ENCODE measurements at regions of chr14 and their contacts with region 1.

Region 1: GRCh38 chr14:67426983-67427606 is 15.1 kb upstream of the PLEK2 start:
- DNase-seq: peak; percentile 73 to 76 (median 74)
- H3K4me3 ChIP-seq: no peak overlapping the region
- H3K4me3 Mint-ChIP-seq: no peak overlapping the region
- H3K27ac ChIP-seq: no peak overlapping the region
- H3K27ac Mint-ChIP-seq: no peak overlapping the region
- H3K4me1 ChIP-seq: peaks cover 7% of the 10 kb centered on the region
- H3K4me1 Mint-ChIP-seq: no peaks in the 10 kb centered on the region
- H3K27me3 ChIP-seq: no peaks in the 10 kb centered on the region
- H3K27me3 Mint-ChIP-seq: peaks cover 12 to 21% of the 10 kb centered on the region in 2 donors

Region 2: DNA sequence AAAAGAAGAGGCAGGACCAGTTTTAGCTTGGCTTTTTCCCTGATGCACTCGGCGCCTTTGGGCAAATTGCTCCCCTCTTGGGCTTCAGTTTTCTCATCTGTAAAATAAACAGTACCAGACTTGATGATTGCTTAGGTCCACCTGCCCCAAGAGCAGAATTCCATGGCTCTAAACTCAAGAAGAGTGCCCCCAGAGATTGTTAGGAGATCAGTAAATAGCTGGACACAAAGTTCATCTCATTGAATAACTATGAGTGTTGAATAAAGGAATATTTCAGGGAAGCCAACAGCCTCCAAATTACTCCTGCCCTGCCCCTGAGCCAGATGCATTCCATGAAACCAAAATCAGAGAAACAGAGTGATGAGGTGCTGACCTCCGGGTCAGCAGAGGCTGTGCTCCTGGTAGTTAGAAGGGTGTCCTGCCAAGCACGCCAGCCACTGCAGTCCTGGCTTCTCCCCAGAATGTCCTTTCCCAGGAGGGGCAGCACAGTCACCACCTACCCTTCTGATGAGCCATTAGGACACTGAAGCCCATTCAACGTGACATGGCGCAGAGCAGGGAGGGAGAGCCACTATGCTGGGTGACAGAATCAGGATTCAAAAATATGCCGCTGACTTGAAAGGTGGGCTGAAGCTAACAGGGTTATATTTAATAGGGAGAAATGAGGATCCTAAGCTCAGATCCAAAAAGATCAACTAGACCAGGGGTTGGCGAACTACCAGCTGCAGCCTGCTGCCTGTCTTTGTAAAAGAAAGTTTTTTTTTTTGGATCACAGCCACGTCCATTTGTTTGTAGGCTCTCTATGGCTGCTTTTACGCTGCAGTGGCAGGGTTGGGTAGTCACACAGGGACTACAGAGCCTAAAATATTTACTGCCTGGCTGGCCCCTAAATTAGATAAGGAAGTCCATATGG is 19.3 kb after region 1 on chr14:
- CTCF ChIA-PET with region 1: interaction called, 14 read pairs
- POLR2A ChIA-PET with region 1: no interaction called
- intact Hi-C with region 1: no loop called
- DNase-seq: no peak
- H3K4me3 ChIP-seq: no peak overlapping the region
- H3K4me3 Mint-ChIP-seq: no peak overlapping the region
- H3K27ac ChIP-seq: no peak overlapping the region
- H3K27ac Mint-ChIP-seq: peak overlapping the region in 1 of 7 donors; percentile 8
- H3K4me1 ChIP-seq: no peaks in the 10 kb centered on the region
- H3K4me1 Mint-ChIP-seq: no peaks in the 10 kb centered on the region
- H3K27me3 ChIP-seq: no peaks in the 10 kb centered on the region
- H3K27me3 Mint-ChIP-seq: peaks cover 5 to 9% of the 10 kb centered on the region in 2 donors

Region 3: DNA sequence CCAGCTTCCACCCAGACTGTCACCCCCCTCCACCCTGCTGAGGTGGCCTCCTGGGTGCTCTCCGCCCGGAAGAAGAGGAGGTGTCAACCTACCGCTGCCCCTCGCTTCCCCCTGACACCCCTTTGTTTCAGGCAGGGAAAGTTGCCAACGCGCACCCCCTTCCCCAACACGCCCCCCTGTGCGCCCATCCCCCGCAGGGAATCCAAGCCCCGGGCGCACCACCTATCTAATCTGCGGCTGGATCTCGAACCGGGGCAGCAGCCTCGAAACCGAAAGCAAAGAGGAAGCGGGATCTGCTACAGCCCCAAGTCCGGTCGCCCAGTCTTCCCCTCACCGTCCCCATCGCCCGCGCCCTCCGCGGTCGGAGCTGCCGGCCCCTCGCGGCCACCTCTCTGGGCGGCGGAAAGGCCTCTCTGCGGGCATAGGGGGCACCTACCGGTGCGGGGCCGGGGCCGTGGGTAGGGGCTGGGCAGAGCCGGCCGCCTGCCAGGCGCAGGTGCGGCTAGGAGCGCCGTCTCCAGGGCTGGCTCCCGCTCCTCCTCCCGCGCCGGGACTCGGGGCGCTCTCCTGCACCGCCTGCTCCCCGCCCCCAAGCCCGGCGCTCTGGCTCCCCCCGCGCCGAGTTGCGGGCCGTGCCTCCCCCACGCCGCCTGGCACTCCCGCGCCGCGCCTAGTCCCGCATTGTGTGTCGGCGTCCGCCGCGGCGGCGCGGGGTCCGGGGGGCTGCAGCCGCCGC is 87.7 kb after region 1 on chr14:
- CTCF ChIA-PET with region 1: interaction called, 12 read pairs
- POLR2A ChIA-PET with region 1: no interaction called
- intact Hi-C with region 1: no loop called
- DNase-seq: peak; percentile 46 to 59 (median 55)
- H3K4me3 ChIP-seq: peak overlapping the region; percentile 53 to 56
- H3K4me3 Mint-ChIP-seq: peak overlapping the region; percentile 90 to 97 (median 94)
- H3K27ac ChIP-seq: peak overlapping the region; percentile 68
- H3K27ac Mint-ChIP-seq: peak overlapping the region; percentile 88 to 96 (median 92)
- H3K4me1 ChIP-seq: peaks cover 25% of the 10 kb centered on the region
- H3K4me1 Mint-ChIP-seq: peaks cover 13 to 36% (median 23%) of the 10 kb centered on the region in 4 donors
- H3K27me3 ChIP-seq: no peaks in the 10 kb centered on the region
- H3K27me3 Mint-ChIP-seq: no peaks in the 10 kb centered on the region

Region 4: GRCh38 chr14:67557126-67557525 is 130.0 kb after region 1 on chr14:
- CTCF ChIA-PET with region 1: interaction called, 324 read pairs
- POLR2A ChIA-PET with region 1: no interaction called
- intact Hi-C with region 1: no loop called
- DNase-seq: no peak
- H3K4me3 ChIP-seq: no peak overlapping the region
- H3K4me3 Mint-ChIP-seq: no peak overlapping the region
- H3K27ac ChIP-seq: no peak overlapping the region
- H3K27ac Mint-ChIP-seq: no peak overlapping the region
- H3K4me1 ChIP-seq: no peaks in the 10 kb centered on the region
- H3K4me1 Mint-ChIP-seq: no peaks in the 10 kb centered on the region
- H3K27me3 ChIP-seq: no peaks in the 10 kb centered on the region
- H3K27me3 Mint-ChIP-seq: peaks cover 0 to 4% of the 10 kb centered on the region in 2 donors

Region 5: GRCh38 chr14:67583711-67584644 is 156.9 kb after region 1 on chr14:
- CTCF ChIA-PET with region 1: interaction called, 26 read pairs
- POLR2A ChIA-PET with region 1: no interaction called
- intact Hi-C with region 1: no loop called
- DNase-seq: peak in 4 of 5 donors; percentile 14 to 34 (median 30)
- H3K4me3 ChIP-seq: no peak overlapping the region
- H3K4me3 Mint-ChIP-seq: no peak overlapping the region
- H3K27ac ChIP-seq: no peak overlapping the region
- H3K27ac Mint-ChIP-seq: no peak overlapping the region
- H3K4me1 ChIP-seq: no peaks in the 10 kb centered on the region
- H3K4me1 Mint-ChIP-seq: no peaks in the 10 kb centered on the region
- H3K27me3 ChIP-seq: no peaks in the 10 kb centered on the region
- H3K27me3 Mint-ChIP-seq: no peaks in the 10 kb centered on the region

Region 6: DNA sequence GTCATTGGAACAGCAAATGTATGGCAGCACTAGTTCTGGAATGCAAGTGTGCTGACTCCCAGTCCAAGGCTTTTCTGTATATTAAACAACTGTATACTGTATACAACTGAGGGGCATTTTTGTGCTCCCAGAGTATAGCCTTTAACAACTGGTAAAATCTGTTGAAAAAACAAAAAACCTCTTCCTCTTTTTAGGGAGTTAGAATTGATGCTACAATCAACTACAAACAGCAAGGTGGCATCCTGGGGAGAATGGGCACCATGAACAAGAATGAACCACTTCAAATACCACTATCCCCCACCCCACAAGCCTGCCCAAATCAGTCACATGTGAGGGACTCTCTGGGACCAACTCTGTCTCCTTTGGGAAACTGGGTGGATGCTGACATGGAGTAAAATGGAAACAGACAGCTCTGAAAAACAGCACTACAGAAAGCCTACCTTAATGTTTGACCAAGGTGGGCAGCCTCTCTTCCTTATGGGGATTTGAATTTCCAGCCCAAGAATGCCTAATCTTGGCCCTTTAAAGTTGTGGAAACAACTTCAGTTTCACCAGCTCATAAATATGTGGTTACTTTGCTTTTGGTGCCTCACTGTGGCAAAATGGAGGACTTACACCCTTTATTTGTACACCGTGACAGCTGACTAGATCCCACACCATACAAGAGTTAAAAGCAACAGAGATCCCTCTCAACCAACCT is 239.8 kb after region 1 on chr14:
- CTCF ChIA-PET with region 1: interaction called, 12 read pairs
- POLR2A ChIA-PET with region 1: no interaction called
- intact Hi-C with region 1: loop called (anchors 1 kb)
- DNase-seq: peak; percentile 42 to 45 (median 45)
- H3K4me3 ChIP-seq: no peak overlapping the region
- H3K4me3 Mint-ChIP-seq: no peak overlapping the region
- H3K27ac ChIP-seq: no peak overlapping the region
- H3K27ac Mint-ChIP-seq: peak overlapping the region; percentile 6 to 75 (median 61)
- H3K4me1 ChIP-seq: peaks cover 43% of the 10 kb centered on the region
- H3K4me1 Mint-ChIP-seq: peaks cover 32 to 66% (median 51%) of the 10 kb centered on the region in 4 donors
- H3K27me3 ChIP-seq: no peaks in the 10 kb centered on the region
- H3K27me3 Mint-ChIP-seq: no peaks in the 10 kb centered on the region

Region 7: DNA sequence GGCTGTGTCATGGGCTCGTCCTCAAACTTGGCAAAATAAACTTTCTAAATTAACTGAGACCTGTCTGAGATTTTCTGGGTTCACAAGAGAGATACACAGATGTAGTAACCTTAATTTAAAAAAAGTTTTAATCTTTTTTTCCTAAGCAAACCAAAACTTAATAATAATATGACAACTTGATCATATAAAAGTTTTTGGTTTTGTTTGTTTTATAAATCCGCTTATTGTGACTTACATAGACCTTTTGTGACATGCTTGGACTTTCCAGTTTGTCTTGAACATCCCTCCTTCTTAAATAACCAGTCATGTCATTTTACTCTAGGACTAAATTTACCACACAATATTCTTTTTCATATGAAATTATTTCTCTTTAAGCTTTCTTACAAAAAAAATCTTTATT is 283.1 kb after region 1 on chr14:
- CTCF ChIA-PET with region 1: interaction called, 88 read pairs
- POLR2A ChIA-PET with region 1: no interaction called
- intact Hi-C with region 1: no loop called
- DNase-seq: no peak
- H3K4me3 ChIP-seq: no peak overlapping the region
- H3K4me3 Mint-ChIP-seq: no peak overlapping the region
- H3K27ac ChIP-seq: no peak overlapping the region
- H3K27ac Mint-ChIP-seq: no peak overlapping the region
- H3K4me1 ChIP-seq: no peaks in the 10 kb centered on the region
- H3K4me1 Mint-ChIP-seq: no peaks in the 10 kb centered on the region
- H3K27me3 ChIP-seq: no peaks in the 10 kb centered on the region
- H3K27me3 Mint-ChIP-seq: no peaks in the 10 kb centered on the region